Caco-2 (cell line): ENCODE measurements at regions of chr19 and their contacts with region 1.

Region 1: DNA sequence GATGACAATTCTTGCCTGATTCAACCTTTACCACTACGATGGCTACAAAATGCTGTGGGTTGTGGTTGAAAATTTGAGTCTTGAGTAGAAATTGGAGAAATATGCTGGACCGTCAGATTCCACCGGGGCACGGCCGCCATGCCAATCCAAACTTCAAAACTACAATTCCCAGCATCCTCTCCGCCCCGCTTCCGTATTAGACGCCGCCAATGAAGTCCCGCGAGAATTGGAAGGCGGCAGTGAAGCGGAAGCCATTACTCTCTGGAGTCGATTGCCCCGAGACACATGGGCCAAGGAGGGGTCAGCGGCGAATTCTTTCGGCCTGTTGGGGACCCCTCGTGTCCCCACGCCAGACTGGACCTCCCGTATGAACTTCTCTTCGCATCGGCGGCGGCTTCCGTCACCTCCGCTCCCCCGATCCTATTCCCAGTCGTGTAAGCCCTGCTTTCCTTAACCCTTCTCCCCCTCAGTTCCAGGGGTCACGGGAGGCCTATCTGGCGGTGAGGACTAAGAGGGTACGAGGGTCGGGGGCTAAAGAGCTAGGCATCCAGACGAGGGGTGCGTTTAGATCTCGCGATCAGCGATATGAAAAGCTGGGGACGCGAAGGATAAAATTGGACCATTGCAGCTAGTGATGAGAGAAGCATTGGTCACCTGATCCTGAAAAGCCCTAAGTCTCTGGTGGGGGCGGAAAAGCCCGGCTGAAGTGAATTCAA is at the start of gene ZNF317:
- DNase-seq: peak; percentile 88 to 91
- H3K4me3 ChIP-seq: peak within 1 kb of the TSS; percentile 91
- H3K4me3 Mint-ChIP-seq: peak within 1 kb of the TSS; percentile 100
- H3K27ac Mint-ChIP-seq: peak within 1 kb of the TSS; percentile 100
- H3K4me1 ChIP-seq: 0 out of 2 replicates have a peak, but pooled peaks cover 7% of the 10 kb centered on the region
- H3K4me1 Mint-ChIP-seq: peaks cover 6% of the 10 kb centered on the region
- H3K27me3 ChIP-seq: no peaks in the 10 kb centered on the region
- H3K27me3 Mint-ChIP-seq: no peaks in the 10 kb centered on the region
- CTCF ChIP-seq: no peak
- total RNA-seq, gene ZNF317: 33.7 and 35.2 TPM in 2 replicates

Region 2: DNA sequence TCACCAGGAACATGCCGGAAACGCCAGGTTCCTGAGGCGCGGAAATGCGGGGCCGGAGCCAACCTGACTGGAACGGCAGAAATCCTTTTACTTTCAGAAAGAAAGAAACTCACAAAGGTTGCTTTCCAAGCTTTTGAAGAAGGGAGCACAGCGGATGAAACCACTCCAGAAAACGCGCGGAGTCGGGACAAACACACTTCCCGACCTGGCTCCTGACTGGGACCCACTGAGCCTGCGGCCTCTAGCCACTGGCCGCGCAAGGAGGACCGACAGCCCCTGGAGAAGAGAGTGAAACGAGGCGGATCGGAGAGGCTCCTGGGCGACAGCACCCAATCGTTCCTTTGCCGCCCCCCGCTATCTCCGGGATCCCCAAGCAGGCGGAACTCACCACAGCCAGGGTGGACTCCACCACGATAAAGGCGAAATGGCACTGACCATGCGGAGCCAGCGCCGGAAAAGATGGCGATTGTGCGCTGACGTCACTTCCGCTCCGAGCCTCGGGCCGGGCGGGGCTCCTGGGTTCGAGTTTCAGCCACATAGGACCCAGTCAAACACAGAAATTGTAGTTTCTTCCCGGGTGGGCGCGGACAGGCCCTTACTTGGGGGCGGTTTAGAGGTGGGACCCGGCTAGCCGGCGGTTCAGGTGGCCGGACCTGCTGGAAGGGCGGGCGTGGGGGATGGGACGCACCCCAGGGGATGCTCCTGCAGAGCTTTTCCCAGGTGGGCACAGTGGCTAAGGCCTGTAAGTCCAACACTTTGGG is 443.9 kb after region 1 on chr19 and contains the start of gene ZNF121:
- CTCF ChIA-PET with region 1: no interaction called
- POLR2A ChIA-PET with region 1: no interaction called
- intact Hi-C with region 1: loop called (anchors 1 kb)
- DNase-seq: peak; percentile 81 to 85
- H3K4me3 ChIP-seq: peak within 1 kb of the TSS; percentile 74
- H3K4me3 Mint-ChIP-seq: peak within 1 kb of the TSS; percentile 90
- H3K27ac Mint-ChIP-seq: peak within 1 kb of the TSS; percentile 98
- H3K4me1 ChIP-seq: no peaks in the 10 kb centered on the region
- H3K4me1 Mint-ChIP-seq: peaks cover 7% of the 10 kb centered on the region
- H3K27me3 ChIP-seq: no peaks in the 10 kb centered on the region
- H3K27me3 Mint-ChIP-seq: no peaks in the 10 kb centered on the region
- CTCF ChIP-seq: no peak
- total RNA-seq, gene ZNF121: 35.5 and 38.4 TPM in 2 replicates

Region 3: DNA sequence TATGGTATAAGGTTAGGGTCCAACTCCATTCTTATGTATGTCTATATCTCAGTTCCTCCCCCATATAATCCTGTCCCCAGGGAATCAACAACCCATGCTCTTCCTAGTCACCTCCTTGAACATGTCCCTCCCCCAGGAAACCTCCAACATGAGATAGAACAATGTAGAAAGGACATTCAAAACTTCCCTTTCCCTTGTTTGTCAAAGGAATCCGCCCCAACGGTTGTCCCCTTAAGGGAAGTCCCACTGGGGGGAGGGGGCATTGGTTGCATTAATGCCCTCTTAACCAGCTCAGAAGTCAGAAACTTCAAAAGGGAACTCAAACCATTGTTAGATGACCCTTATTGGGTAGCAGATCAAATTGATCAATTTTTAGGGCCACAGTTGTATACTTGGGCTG is 487.5 kb after region 1 on chr19:
- CTCF ChIA-PET with region 1: no interaction called
- POLR2A ChIA-PET with region 1: no interaction called
- intact Hi-C with region 1: loop called (anchors 5 kb)
- DNase-seq: no peak
- H3K4me3 ChIP-seq: no peak overlapping the region
- H3K4me3 Mint-ChIP-seq: no peak overlapping the region
- H3K27ac Mint-ChIP-seq: no peak overlapping the region
- H3K4me1 ChIP-seq: no peaks in the 10 kb centered on the region
- H3K4me1 Mint-ChIP-seq: no peaks in the 10 kb centered on the region
- H3K27me3 ChIP-seq: no peaks in the 10 kb centered on the region
- H3K27me3 Mint-ChIP-seq: no peaks in the 10 kb centered on the region
- CTCF ChIP-seq: no peak

Region 4: GRCh38 chr19:9914315-9915207 is 774.2 kb after region 1 on chr19:
- CTCF ChIA-PET with region 1: no interaction called
- POLR2A ChIA-PET with region 1: no interaction called
- intact Hi-C with region 1: loop called (anchors 5 kb)
- DNase-seq: peak; percentile 74 to 84
- H3K4me3 ChIP-seq: peak overlapping the region; percentile 46
- H3K4me3 Mint-ChIP-seq: peak overlapping the region; percentile 46
- H3K27ac Mint-ChIP-seq: no peak overlapping the region
- H3K4me1 ChIP-seq: no peaks in the 10 kb centered on the region
- H3K4me1 Mint-ChIP-seq: peaks cover 7% of the 10 kb centered on the region
- H3K27me3 ChIP-seq: no peaks in the 10 kb centered on the region
- H3K27me3 Mint-ChIP-seq: peaks cover 8% of the 10 kb centered on the region
- CTCF ChIP-seq: peak; percentile 64 to 74